Activated CD4-positive, alpha-beta memory T cell treated with anti-CD3 and anti-CD28 coated beads for 36 hours (primary cell): ENCODE measurements at regions of chr5 and their contacts with region 1.

Region 1: DNA sequence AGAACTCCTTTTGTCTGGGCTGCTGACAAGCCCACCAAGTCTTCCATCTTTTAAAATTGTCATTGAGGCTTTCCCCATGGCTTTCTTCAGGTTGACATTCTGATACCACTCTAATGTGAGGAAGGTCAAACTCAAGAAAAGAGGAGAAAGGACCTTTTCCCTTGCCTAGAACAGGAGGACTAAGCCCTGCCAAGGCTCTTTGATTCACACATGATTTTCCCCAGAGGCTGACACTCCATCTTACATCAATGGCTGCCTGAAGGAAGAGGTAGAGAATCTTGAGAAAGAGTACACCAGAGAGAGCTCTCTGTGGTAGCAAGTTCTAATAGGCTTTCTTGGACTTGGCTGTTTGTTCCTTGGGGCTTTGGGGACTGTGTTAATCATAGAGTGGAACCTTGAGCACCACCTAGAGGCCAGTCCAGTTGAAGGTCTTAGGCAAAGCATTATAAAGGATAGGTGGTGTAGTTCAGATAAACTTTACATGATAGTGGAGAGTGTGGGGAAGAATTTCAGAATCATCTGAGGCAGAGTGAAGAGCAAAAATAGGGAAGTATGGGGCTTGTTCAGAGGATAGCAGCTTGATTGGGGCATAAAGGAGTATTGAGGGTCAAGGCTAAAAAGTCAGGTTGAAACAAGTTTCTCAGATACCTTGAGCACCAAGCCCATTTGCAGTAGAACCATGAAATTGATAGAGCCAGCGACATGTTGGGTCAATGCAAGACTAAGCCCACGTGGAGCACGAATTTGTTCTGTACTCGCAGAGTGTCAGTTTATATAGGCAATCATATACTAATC is 36.7 kb downstream of the NDFIP1 start:
- DNase-seq: peak; percentile 67
- H3K4me3 Mint-ChIP-seq: no peak overlapping the region
- H3K27ac Mint-ChIP-seq: no peak overlapping the region
- H3K4me1 Mint-ChIP-seq: peaks cover 2% of the 10 kb centered on the region
- H3K27me3 Mint-ChIP-seq: no peaks in the 10 kb centered on the region

Region 2: DNA sequence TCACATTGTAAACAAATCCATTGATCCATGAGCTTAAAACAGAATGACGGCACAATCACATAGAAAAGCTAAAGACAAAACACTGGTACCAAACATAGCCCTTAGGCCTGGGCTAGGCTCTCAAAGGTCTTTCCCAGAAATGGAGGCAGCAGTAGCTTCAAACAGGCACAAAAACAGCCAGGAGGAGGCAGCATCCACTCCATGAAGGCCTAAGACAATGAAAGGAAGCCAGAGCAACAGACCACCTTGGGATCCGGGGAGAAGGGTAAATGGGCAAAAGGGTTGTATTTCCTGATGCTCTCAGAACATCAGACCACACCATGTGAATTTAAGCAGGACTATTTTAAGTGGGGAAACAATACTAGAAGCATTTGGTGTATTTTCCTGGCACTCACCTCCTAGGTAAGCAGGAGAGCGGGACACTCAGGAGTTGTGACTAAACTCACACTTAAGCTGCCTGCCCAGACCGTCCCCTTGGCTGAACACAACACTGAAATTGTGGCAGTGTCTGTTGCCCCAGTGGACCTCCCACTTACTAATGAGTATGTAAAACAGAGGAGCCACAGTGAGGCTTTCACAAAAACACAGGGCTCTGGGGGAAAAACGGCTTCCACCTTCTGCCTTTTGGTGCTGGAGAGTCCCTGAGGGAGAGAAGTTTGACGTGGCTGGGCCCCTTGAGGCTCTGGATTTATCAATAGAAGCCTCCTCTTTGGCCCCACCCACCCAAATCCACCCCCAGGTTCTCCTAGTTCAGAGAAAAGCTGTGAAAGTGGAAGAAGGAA is 144.4 kb before region 1 on chr5:
- CTCF ChIA-PET with region 1: interaction called, 197 read pairs
- POLR2A ChIA-PET with region 1: no interaction called
- intact Hi-C with region 1: no loop called
- DNase-seq: peak; percentile 43
- H3K4me3 Mint-ChIP-seq: no peak overlapping the region
- H3K27ac Mint-ChIP-seq: peak overlapping the region; percentile 84
- H3K4me1 Mint-ChIP-seq: peaks cover 21% of the 10 kb centered on the region
- H3K27me3 Mint-ChIP-seq: no peaks in the 10 kb centered on the region

Region 3: GRCh38 chr5:142024771-142025304 is 120.5 kb before region 1 on chr5:
- CTCF ChIA-PET with region 1: interaction called, 12 read pairs
- POLR2A ChIA-PET with region 1: no interaction called
- intact Hi-C with region 1: no loop called
- DNase-seq: peak; percentile 93
- H3K4me3 Mint-ChIP-seq: peak overlapping the region; percentile 88
- H3K27ac Mint-ChIP-seq: peak overlapping the region; percentile 99
- H3K4me1 Mint-ChIP-seq: peaks cover 17% of the 10 kb centered on the region
- H3K27me3 Mint-ChIP-seq: no peaks in the 10 kb centered on the region

Region 4: GRCh38 chr5:142128675-142129208 is 16.6 kb before region 1 on chr5:
- CTCF ChIA-PET with region 1: interaction called, 52 read pairs
- POLR2A ChIA-PET with region 1: no interaction called
- intact Hi-C with region 1: no loop called
- DNase-seq: no peak
- H3K4me3 Mint-ChIP-seq: no peak overlapping the region
- H3K27ac Mint-ChIP-seq: peak overlapping the region; percentile 53
- H3K4me1 Mint-ChIP-seq: peaks cover 61% of the 10 kb centered on the region
- H3K27me3 Mint-ChIP-seq: no peaks in the 10 kb centered on the region

Region 5: DNA sequence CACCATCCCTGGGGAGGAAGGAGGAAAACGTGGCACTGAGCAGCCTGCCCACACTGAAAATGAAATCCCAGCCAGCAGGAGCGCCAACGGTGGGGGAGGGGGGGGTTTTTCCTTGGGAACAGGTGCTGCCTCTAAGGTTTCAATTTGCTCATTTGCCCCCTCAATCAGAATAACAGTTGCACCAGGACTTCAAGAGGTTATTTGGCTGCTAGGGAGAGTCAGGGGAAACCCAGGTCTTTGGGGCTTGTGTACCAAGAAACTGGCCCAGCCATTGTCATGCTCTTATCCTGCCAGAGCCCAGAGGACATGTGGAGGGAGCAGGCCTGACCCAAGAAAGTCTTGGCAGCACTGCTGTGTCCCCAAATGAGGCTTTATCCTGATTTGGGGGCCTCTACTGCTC is 29.7 kb after region 1 on chr5:
- CTCF ChIA-PET with region 1: no interaction called
- POLR2A ChIA-PET with region 1: no interaction called
- intact Hi-C with region 1: no loop called
- DNase-seq: no peak
- H3K4me3 Mint-ChIP-seq: no peak overlapping the region
- H3K27ac Mint-ChIP-seq: no peak overlapping the region
- H3K4me1 Mint-ChIP-seq: no peaks in the 10 kb centered on the region
- H3K27me3 Mint-ChIP-seq: peaks cover 2% of the 10 kb centered on the region